ENCODE measurements at regions of chr17 and their contacts with region 1.

Region 1: GRCh38 chr17:28726226-28727130 is at the start of gene TLCD1:
- DNase-seq: peak; percentile 94
- ATAC-seq: peak; percentile 48
- H3K4me3 ChIP-seq: peak within 1 kb of the TSS; percentile 73 to 90 (median 87)
- H3K27ac ChIP-seq: peak within 1 kb of the TSS; percentile 88
- H3K4me1 ChIP-seq: peaks cover 57% of the 10 kb centered on the region
- H3K27me3 ChIP-seq: no peaks in the 10 kb centered on the region; a peak in 1 of 5 replicates
- CTCF ChIP-seq: peak; percentile 99
- EP300 ChIP-seq: no peak
- POLR2A ChIP-seq: no peak
- RAD21 ChIP-seq: peak; percentile 99
- total RNA-seq, gene TLCD1: 9.6 and 19.6 TPM in 2 replicates

Region 2: GRCh38 chr17:28634206-28634856 is 92.1 kb before region 1 on chr17:
- CTCF ChIA-PET with region 1: no interaction called
- POLR2A ChIA-PET with region 1: no interaction called
- in situ Hi-C with region 1: no loop called
- intact Hi-C with region 1: no loop called
- DNase-seq: no peak
- ATAC-seq: no peak
- H3K4me3 ChIP-seq: no peak overlapping the region
- H3K27ac ChIP-seq: no peak overlapping the region
- H3K4me1 ChIP-seq: no peaks in the 10 kb centered on the region
- H3K27me3 ChIP-seq: no peaks in the 10 kb centered on the region
- CTCF ChIP-seq: no peak
- EP300 ChIP-seq: no peak
- POLR2A ChIP-seq: no peak
- RAD21 ChIP-seq: no peak

Region 3: DNA sequence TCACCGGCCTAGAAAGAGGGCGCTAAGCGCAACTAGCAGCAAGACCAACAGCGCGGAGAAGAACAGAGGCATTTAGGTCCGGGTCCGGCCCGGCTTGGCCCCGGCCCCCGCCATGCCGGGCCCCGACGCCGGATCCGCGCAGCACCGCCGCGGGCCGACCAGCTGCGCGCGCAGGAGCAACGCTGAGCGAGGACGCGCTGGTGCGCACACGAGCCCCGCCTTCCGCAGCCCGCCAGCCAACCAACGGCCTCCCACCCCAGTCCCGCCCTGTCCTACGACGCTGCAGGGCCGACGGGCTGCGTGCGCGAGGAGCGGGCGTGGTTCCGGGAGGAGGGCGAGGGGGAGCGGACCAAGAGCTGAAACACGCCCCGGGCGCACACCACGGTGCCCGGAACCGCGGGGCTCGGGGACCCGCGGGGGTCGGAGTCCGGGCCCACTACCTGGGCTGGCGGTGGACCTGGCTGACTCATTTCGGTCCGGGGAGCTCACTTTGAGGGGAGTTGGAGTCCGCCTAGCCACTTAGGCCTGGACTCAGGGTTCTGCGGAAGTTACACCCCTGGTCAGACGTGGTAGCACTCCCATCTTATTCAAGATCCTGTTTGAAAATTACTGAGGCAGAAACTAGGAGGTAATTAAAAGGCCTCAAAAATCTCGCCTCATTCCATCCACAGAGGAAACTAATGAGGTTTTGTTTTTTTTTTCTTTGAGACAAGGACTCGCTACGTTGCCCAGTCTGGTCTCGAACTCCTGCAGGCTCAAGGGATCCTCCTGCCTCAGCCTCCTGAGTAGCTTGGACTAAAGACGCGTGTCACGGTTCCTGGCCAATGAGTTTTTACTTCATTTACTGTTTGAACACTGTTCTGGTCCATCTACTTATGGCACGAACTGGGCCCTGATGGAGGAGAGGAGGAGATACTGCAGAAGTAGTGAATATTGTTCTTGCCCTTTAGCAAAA is 81.2 kb before region 1 on chr17 and contains the start of gene BLTP2:
- CTCF ChIA-PET with region 1: no interaction called
- POLR2A ChIA-PET with region 1: interaction called, 50 read pairs
- in situ Hi-C with region 1: no loop called
- intact Hi-C with region 1: loop called (anchors 5 kb)
- DNase-seq: peak; percentile 85
- ATAC-seq: peak; percentile 97
- H3K4me3 ChIP-seq: peak within 1 kb of the TSS; percentile 84 to 95 (median 92)
- H3K27ac ChIP-seq: peak within 1 kb of the TSS; percentile 68
- H3K4me1 ChIP-seq: peaks cover 54% of the 10 kb centered on the region
- H3K27me3 ChIP-seq: no peaks in the 10 kb centered on the region; a peak in 1 of 5 replicates
- CTCF ChIP-seq: peak; percentile 23; the same call in 1 of the 2 replicates
- EP300 ChIP-seq: no peak
- POLR2A ChIP-seq: peak; percentile 61 to 87
- RAD21 ChIP-seq: no peak; the same call in 1 of the 2 replicates
- total RNA-seq, gene BLTP2: 61.0 and 66.7 TPM in 2 replicates

Region 4: GRCh38 chr17:28684963-28685362 is 41.5 kb before region 1 on chr17:
- CTCF ChIA-PET with region 1: no interaction called
- POLR2A ChIA-PET with region 1: no interaction called
- in situ Hi-C with region 1: no loop called
- intact Hi-C with region 1: loop called (anchors 2 kb)
- DNase-seq: peak; percentile 65
- ATAC-seq: peak; percentile 68
- H3K4me3 ChIP-seq: no peak overlapping the region
- H3K27ac ChIP-seq: no peak overlapping the region
- H3K4me1 ChIP-seq: 0 out of 2 replicates have a peak, but pooled peaks cover 7% of the 10 kb centered on the region
- H3K27me3 ChIP-seq: no peaks in the 10 kb centered on the region
- CTCF ChIP-seq: peak; percentile 79
- EP300 ChIP-seq: no peak
- POLR2A ChIP-seq: no peak
- RAD21 ChIP-seq: 0 out of 2 replicates have a peak, but pooled peaks have one; percentile 38

Region 5: DNA sequence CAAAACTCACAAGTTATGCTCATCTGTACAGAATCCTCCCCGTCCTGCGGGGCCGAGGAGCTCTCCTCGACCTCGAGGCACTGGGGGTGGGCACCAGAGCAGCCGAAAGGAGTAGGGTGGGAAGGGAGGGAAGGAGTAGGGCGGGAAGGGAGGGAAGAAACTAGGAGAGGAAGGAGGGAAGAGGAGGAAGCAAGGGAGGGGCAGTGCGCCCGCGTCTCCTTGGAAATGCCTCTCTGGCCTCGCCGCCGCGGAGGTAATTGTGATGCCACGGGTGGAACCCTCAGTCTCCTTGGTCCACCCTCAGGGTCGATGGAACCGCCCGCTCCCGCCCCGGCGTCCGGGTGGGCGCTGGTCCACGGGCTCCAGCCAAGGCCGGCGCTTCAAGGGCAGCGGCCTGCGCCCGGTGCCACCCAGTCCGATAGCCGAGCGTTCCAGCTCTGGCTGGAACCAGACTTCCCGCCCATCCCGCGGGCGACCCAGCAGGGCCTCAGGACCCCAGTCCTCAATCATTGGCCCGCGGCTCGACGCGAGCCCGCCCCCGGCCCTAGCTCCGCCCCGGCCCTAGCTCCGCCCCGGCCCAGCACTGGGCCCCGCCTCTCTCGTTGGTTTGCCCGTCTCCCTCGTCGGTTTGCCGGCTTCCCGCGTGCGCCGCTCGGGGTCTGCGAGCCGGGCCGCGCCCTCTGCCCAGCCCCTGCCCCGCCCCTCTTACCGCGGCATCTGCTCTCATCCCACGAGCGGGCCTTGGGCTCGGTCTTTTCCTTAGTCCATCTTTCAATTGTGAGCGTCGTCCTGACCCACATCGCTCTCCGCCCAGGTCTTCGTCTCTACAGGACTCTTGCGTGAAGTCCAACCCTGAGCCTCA is 15.4 kb before region 1 on chr17:
- CTCF ChIA-PET with region 1: no interaction called
- POLR2A ChIA-PET with region 1: interaction called, 220 read pairs
- in situ Hi-C with region 1: no loop called
- intact Hi-C with region 1: no loop called
- DNase-seq: peak; percentile 86
- ATAC-seq: peak; percentile 91
- H3K4me3 ChIP-seq: peak overlapping the region; percentile 65 to 76 (median 67)
- H3K27ac ChIP-seq: peak overlapping the region; percentile 99
- H3K4me1 ChIP-seq: peaks cover 47% of the 10 kb centered on the region
- H3K27me3 ChIP-seq: peaks cover 0 to 2% of the 10 kb centered on the region in 2 experiments; a peak in 2 of 5 replicates
- CTCF ChIP-seq: no peak
- EP300 ChIP-seq: 0 out of 4 replicates have a peak, but pooled peaks of 1 of the 2 experiments have one; percentile 15
- POLR2A ChIP-seq: peak; percentile 92 to 97
- RAD21 ChIP-seq: peak; percentile 74; the same call in 1 of the 2 replicates

Region 6: GRCh38 chr17:28750178-28751047 is 23.9 kb after region 1 on chr17:
- CTCF ChIA-PET with region 1: interaction called, 142 read pairs
- POLR2A ChIA-PET with region 1: interaction called, 590 read pairs
- in situ Hi-C with region 1: no loop called
- intact Hi-C with region 1: loop called (anchors 1 kb)
- DNase-seq: peak; percentile 88
- ATAC-seq: peak; percentile 66
- H3K4me3 ChIP-seq: no peak overlapping the region
- H3K27ac ChIP-seq: peak overlapping the region; percentile 37
- H3K4me1 ChIP-seq: peaks cover 50% of the 10 kb centered on the region
- H3K27me3 ChIP-seq: no peaks in the 10 kb centered on the region
- CTCF ChIP-seq: peak; percentile 98
- EP300 ChIP-seq: no peak
- POLR2A ChIP-seq: peak in 1 of 2 experiments; percentile 43; a peak in 2 of 4 replicates
- RAD21 ChIP-seq: peak; percentile 95

Region 7: GRCh38 chr17:28908640-28909167 is 182.2 kb after region 1 on chr17:
- CTCF ChIA-PET with region 1: no interaction called
- POLR2A ChIA-PET with region 1: interaction called, 13 read pairs
- in situ Hi-C with region 1: no loop called
- intact Hi-C with region 1: no loop called
- DNase-seq: peak; percentile 86
- ATAC-seq: peak; percentile 80
- H3K4me3 ChIP-seq: no peak overlapping the region; a peak in 1 of 6 replicates
- H3K27ac ChIP-seq: peak overlapping the region; percentile 70
- H3K4me1 ChIP-seq: peaks cover 63% of the 10 kb centered on the region
- H3K27me3 ChIP-seq: no peaks in the 10 kb centered on the region
- CTCF ChIP-seq: 0 out of 2 replicates have a peak, but pooled peaks have one; percentile 5
- EP300 ChIP-seq: no peak
- POLR2A ChIP-seq: no peak
- RAD21 ChIP-seq: no peak

Region 8: DNA sequence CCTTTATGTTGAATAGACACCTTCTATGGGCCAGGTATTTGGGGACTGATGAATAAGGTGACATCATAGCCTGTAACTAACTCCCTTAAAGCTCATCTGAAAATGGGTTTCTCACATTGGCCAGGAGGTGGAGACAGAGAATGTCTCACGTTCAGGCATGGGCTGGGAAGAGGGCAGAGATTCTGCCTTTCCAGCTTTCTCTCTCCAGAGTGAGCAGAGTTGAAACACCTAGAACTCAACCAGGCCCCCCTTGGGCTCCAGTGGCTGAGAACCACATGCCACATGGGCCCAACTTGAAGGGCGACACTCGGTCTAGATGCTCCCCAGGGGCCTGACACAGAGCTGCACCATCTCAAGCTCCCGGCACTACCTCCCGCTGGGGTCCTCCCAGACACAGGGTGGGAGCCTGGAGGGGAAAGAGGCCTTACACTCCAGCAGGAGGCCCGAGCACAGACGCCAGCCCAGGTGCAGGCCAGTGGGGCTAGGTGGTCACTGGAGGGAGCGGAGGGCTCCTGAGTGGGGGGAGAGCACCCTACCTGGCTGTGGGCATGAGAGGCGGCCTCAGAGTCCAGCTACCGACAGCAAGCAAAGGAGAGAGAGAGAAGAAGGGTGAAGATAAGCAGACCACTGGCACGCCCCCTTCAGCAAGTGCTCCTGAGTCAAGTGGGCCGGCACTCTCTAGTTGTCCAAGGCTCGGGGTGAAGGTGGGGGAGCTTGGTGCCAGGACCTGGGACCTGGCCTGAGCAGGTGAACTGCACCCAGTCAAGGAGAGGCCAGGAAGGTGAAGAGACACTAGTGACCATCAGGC is 397.8 kb after region 1 on chr17:
- CTCF ChIA-PET with region 1: no interaction called
- POLR2A ChIA-PET with region 1: no interaction called
- in situ Hi-C with region 1: loop called (anchors 25 kb)
- intact Hi-C with region 1: no loop called
- DNase-seq: peak; percentile 71
- ATAC-seq: peak; percentile 86
- H3K4me3 ChIP-seq: no peak overlapping the region
- H3K27ac ChIP-seq: no peak overlapping the region
- H3K4me1 ChIP-seq: no peaks in the 10 kb centered on the region
- H3K27me3 ChIP-seq: no peaks in the 10 kb centered on the region
- CTCF ChIP-seq: peak; percentile 82
- EP300 ChIP-seq: no peak
- POLR2A ChIP-seq: no peak
- RAD21 ChIP-seq: peak; percentile 68

Measured in HepG2 (cell line).